SK-N-SH (cell line): ENCODE measurements at regions of chrX and their contacts with region 1.

Region 1: GRCh38 chrX:13627311-13627710 is 25.6 kb upstream of the TCEANC start:
- DNase-seq: no peak
- H3K4me3 ChIP-seq: no peak overlapping the region
- H3K27ac ChIP-seq: no peak overlapping the region
- H3K4me1 ChIP-seq: no peaks in the 10 kb centered on the region
- H3K27me3 ChIP-seq: peaks cover 12% of the 10 kb centered on the region
- CTCF ChIP-seq: no peak
- EP300 ChIP-seq: no peak
- RAD21 ChIP-seq: no peak

Region 2: GRCh38 chrX:13646154-13646549 is 18.8 kb after region 1 on chrX:
- CTCF ChIA-PET with region 1: interaction called, 19 read pairs
- POLR2A ChIA-PET with region 1: no interaction called
- DNase-seq: peak; percentile 40
- H3K4me3 ChIP-seq: no peak overlapping the region
- H3K27ac ChIP-seq: no peak overlapping the region
- H3K4me1 ChIP-seq: no peaks in the 10 kb centered on the region
- H3K27me3 ChIP-seq: no peaks in the 10 kb centered on the region
- CTCF ChIP-seq: peak; percentile 83
- EP300 ChIP-seq: no peak
- RAD21 ChIP-seq: peak; percentile 73